Endothelial cell of umbilical vein (primary cell): ENCODE measurements at regions of chr2 and their contacts with region 1.

Region 1: DNA sequence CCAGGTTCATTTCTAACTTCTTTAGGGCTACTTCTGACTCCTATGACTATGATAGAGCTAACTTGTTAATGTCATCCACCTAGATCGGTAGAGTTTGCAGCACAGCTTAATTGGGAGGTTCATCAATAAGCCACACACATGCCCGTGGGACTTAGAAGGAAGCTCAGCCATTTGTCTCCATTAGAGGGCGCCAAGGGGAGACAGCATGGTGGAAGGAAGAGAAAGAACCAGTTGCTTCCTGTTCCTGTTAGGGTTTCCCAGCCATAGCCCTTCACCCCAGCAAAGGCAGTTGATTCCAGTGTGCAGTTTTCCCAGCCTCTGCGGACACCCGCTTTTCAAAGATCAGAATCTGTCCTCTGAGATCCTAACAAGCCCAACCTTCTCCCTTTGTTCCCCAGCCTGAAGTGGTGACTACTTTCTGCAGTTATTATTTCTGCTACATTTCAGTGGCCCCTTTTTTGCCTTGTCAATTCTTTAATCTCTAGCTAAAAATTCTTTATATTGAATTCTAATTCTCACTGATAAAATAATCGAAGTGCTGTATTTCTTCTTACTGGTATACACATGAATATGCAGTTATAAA is 30.3 kb downstream of the MAIP1 start:
- DNase-seq: peak; percentile 43
- H3K4me3 ChIP-seq: no peak overlapping the region
- H3K27ac ChIP-seq: no peak overlapping the region
- H3K4me1 ChIP-seq: peaks cover 8% of the 10 kb centered on the region
- H3K27me3 ChIP-seq: peaks cover 2 to 3% of the 10 kb centered on the region in 2 experiments
- CTCF ChIP-seq: peak; percentile 56 to 68
- POLR2A ChIP-seq: no peak

Region 2: DNA sequence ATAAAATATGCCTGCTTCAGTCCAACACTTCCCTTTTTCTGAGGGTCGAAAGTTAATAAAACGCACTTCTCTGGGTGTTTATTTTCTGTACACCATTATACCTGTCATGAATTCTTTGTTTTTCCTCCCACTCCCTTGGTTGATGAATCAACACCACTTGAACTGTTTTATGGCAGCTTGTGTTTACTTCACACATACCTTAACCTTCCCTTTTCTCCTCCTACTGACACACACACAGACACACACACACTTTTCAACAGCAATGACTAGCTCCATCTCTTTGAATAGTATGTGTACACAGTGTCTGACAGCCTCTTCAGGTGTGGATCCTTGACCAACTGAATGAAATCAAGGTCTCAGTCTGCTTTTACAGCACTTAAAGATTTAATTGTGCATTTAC is 619.3 kb before region 1 on chr2:
- CTCF ChIA-PET with region 1: no interaction called
- POLR2A ChIA-PET with region 1: no interaction called
- dilution Hi-C with region 1: no loop called
- intact Hi-C with region 1: no loop called
- DNase-seq: no peak
- H3K4me3 ChIP-seq: no peak overlapping the region
- H3K27ac ChIP-seq: no peak overlapping the region
- H3K4me1 ChIP-seq: no peaks in the 10 kb centered on the region
- H3K27me3 ChIP-seq: no peaks in the 10 kb centered on the region
- CTCF ChIP-seq: no peak
- POLR2A ChIP-seq: no peak

Region 3: GRCh38 chr2:199962203-199962602 is 23.5 kb before region 1 on chr2:
- CTCF ChIA-PET with region 1: no interaction called
- POLR2A ChIA-PET with region 1: no interaction called
- dilution Hi-C with region 1: no loop called
- intact Hi-C with region 1: no loop called
- DNase-seq: no peak
- H3K4me3 ChIP-seq: no peak overlapping the region
- H3K27ac ChIP-seq: no peak overlapping the region
- H3K4me1 ChIP-seq: no peaks in the 10 kb centered on the region
- H3K27me3 ChIP-seq: no peaks in the 10 kb centered on the region
- CTCF ChIP-seq: no peak
- POLR2A ChIP-seq: no peak

Region 4: DNA sequence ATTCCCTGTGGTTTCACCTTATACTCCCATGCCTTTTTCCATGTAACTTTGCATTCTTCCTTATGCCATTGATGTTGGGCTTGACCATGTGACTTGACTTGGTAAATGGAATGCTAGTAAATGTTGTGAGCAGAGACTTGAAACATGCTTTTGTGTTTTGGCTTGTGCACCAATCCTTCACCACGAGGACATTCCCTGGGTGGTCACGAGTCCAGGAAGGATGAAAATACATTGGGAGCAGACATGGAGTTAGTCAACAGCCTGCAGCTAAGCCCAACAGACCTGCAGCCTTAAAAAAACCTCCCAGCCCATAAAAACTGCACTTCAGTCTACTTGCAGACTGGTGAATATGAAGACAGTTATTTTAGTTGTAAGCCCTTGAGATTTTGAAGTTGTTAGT is 204.2 kb after region 1 on chr2:
- CTCF ChIA-PET with region 1: no interaction called
- POLR2A ChIA-PET with region 1: no interaction called
- dilution Hi-C with region 1: no loop called
- intact Hi-C with region 1: loop called (anchors 10 kb)
- DNase-seq: no peak
- H3K4me3 ChIP-seq: no peak overlapping the region
- H3K27ac ChIP-seq: no peak overlapping the region
- H3K4me1 ChIP-seq: no peaks in the 10 kb centered on the region
- H3K27me3 ChIP-seq: peaks cover 11 to 22% of the 10 kb centered on the region in 2 experiments
- CTCF ChIP-seq: no peak
- POLR2A ChIP-seq: no peak

Region 5: DNA sequence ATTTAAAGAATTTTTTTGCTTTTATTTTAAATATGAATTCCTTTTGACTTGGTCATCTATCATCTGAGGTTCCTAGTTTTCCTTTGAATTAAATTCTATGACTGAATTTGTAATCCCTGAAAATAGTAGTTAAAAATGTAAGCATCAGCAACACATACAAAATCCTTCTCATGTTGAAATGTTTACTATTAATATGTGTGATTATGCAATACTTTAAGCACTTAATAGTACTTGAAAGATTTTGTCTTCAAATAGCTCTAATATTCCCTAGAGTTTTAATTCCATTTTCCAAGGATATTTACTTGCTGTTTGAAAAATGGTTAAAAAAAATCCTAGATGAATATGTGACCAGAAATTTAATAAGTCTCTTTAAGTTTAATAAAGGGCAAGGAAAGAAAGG is 294.1 kb after region 1 on chr2:
- CTCF ChIA-PET with region 1: no interaction called
- POLR2A ChIA-PET with region 1: no interaction called
- dilution Hi-C with region 1: no loop called
- intact Hi-C with region 1: no loop called
- DNase-seq: no peak
- H3K4me3 ChIP-seq: no peak overlapping the region
- H3K27ac ChIP-seq: no peak overlapping the region
- H3K4me1 ChIP-seq: no peaks in the 10 kb centered on the region
- H3K27me3 ChIP-seq: peaks cover 14 to 18% of the 10 kb centered on the region in 2 experiments
- CTCF ChIP-seq: no peak
- POLR2A ChIP-seq: no peak